Posterior vena cava (tissue), 2 donors: ENCODE measurements at regions of chr9 and their contacts with region 1.

Region 1: DNA sequence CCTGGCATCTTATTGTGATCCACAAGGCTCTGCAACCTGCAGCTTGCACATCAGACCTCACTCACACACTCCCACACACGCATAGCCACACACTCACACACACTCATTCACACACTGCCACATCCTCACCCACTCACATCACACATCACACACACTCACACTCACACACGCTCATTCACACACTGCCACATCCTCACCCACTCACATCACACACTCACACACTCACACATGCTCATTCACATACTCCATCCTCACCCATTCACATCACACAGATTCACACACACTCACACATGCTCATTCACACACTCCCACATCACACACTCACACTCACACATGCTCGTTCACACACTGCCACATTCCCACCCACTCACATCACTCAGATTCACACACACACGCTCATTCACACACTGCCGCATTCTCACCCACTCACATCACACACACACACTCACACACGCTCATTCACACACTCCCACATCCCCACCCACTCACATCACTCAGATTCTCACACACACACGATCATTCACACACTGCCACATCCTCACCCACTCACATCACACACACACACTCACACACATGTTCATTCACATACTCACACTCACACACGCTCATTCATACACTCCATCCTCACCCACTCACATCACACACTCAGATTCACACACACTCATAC is 47.1 kb upstream of the RXRA start:
- DNase-seq: no peak

Region 2: DNA sequence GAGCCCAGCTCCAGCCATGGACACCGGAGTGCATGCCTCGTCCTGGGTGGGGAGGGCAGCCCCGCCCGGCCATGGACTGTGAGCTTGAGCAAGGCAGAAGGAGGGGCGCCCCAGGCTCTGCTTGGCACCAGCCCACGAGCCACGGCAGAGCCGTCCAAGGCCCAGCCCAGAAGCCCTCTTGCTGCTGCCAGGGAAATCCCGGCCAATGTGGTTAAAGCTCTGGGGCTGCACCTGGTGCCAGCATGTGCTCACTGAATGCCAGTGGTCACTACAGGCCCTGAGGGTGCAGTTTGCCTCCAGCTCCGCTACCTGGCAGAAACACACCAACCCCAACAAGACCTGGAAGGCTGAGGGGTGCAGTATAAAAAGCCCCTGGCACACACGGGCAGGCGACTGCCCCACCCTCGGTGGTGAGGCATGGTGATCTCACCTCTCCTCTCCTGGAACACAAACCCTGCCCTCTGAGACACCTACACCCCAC is 223.1 kb before region 1 on chr9:
- intact Hi-C with region 1: no loop called
- DNase-seq: peak; percentile 92

Region 3: DNA sequence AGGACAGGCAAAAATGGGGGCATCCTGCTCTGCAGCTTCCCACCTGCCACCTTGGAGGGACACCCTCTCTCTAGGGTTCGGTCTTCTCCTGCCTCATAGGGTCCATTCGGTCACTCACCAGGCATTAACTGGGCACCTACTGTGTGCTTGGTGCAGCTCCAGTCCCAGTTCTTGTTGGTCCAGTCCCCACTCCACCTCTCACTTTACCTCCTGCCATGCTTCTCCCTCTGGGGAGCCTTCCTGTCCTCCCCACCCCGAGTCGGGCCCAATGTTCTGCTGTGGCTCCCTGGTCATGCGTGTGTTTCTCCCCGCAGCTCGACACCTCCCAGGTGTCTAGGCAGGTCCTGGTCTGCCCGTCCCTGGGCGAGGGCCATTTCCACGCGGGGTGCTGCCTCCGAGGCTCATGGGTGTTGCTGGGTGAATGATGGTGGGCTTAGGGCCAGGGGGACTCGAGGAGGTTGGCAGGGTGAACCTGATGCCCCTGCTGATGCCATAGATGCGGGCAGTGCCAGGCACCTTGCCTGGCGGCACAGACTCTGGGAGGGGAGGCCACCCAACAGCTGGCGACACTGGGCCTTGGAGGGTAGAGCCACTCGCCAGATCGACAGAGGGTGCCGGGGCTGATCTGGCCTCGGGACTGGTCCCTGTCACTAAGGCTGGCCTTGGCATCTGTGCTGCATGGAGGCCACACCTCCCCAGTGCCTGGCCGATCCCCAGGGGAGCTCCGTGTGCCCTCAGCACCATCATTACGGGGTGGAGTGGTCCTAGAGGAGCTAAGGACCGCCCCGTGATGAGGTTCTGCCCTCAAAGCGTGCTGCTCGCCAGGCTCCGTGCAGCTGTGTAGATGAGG is 48.8 kb before region 1 on chr9:
- intact Hi-C with region 1: loop called in 1 of 2 experiments (anchors 1 kb)
- DNase-seq: no peak